ENCODE measurements at regions of chr13 and their contacts with region 1.

Region 1: DNA sequence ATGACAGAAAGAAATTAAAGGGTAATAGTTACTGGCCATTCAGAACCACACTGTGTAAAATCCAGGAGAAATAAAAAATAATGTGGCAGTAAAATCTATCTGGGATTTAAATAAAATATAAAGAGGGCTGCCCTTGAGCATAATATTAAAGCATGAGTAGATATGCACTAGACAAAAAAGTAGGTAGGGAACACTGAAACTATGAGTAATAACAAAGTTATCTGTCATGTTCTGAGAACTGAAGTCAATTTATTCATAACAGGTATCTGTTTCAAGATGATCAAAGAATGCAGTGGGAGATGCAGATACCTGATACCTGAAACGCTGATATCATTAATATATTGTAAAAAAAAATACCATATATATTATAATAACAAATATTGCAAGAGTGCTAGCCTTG is 1672.0 kb downstream of the SLITRK5 start:
- DNase-seq: no peak
- ATAC-seq: no peak
- H3K4me3 ChIP-seq: no peak overlapping the region
- H3K27ac ChIP-seq: no peak overlapping the region
- H3K4me1 ChIP-seq: no peaks in the 10 kb centered on the region
- H3K27me3 ChIP-seq: no peaks in the 10 kb centered on the region
- CTCF ChIP-seq: no peak
- POLR2A ChIP-seq: no peak
- RAD21 ChIP-seq: no peak

Region 2: GRCh38 chr13:89169951-89170350 is 173.2 kb before region 1 on chr13:
- CTCF ChIA-PET with region 1: no interaction called
- POLR2A ChIA-PET with region 1: no interaction called
- dilution Hi-C with region 1: no loop called
- in situ Hi-C with region 1: no loop called
- intact Hi-C with region 1: no loop called
- DNase-seq: no peak
- ATAC-seq: no peak
- H3K4me3 ChIP-seq: no peak overlapping the region
- H3K27ac ChIP-seq: no peak overlapping the region
- H3K4me1 ChIP-seq: no peaks in the 10 kb centered on the region
- H3K27me3 ChIP-seq: no peaks in the 10 kb centered on the region
- CTCF ChIP-seq: no peak
- POLR2A ChIP-seq: no peak
- RAD21 ChIP-seq: no peak

Region 3: DNA sequence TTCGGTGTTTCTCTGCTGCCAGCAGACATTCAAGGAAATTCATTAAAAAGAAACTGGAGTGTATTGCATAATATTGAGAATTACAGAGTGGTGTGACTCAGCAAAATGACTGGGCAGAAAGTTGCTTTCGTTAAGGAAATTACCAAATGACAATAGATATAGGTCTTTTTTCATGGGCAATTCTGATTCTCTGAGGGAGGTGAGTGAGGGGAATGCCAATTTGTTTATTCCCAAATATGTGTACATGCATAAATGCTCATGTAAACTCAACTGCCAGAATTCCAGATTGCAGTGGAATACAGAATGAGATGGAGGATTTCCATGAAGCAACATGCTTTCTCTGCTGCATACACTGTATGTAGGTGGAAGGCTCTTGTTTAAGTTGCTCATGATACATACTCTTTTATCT is 58.1 kb after region 1 on chr13:
- CTCF ChIA-PET with region 1: no interaction called
- POLR2A ChIA-PET with region 1: no interaction called
- dilution Hi-C with region 1: no loop called
- in situ Hi-C with region 1: no loop called
- intact Hi-C with region 1: loop called (anchors 5 kb)
- DNase-seq: peak; percentile 73
- ATAC-seq: peak; percentile 69
- H3K4me3 ChIP-seq: no peak overlapping the region
- H3K27ac ChIP-seq: peak overlapping the region; percentile 83; the same call in 1 of the 2 replicates
- H3K4me1 ChIP-seq: peaks cover 3% of the 10 kb centered on the region; the same call in 1 of the 2 replicates
- H3K27me3 ChIP-seq: no peaks in the 10 kb centered on the region
- CTCF ChIP-seq: no peak
- POLR2A ChIP-seq: no peak
- RAD21 ChIP-seq: no peak

Measured in IMR-90 (cell line).